ENCODE measurements at regions of chr14 and their contacts with region 1.

Region 1: GRCh38 chr14:95515596-95516552 is 576 bp downstream of the SYNE3 start:
- DNase-seq: peak; percentile 37 to 74
- ATAC-seq: peak; percentile 85 to 94
- H3K4me3 ChIP-seq: peak overlapping the region; percentile 85
- H3K27ac ChIP-seq: peak overlapping the region; percentile 55 to 84; a peak in 5 of 6 replicates
- H3K4me1 ChIP-seq: peaks cover 11% of the 10 kb centered on the region; the same call in 2 of the 3 replicates
- CTCF ChIP-seq: no peak
- EP300 ChIP-seq: no peak
- POLR2A ChIP-seq: no peak
- RAD21 ChIP-seq: no peak

Region 2: GRCh38 chr14:95413289-95414215 is 102.3 kb before region 1 on chr14:
- CTCF ChIA-PET with region 1: no interaction called
- POLR2A ChIA-PET with region 1: no interaction called
- DNase-seq: no peak
- ATAC-seq: peak in 1 of 2 experiments; percentile 25; a peak in 1 of 6 replicates
- H3K4me3 ChIP-seq: no peak overlapping the region
- H3K27ac ChIP-seq: no peak overlapping the region
- H3K4me1 ChIP-seq: no peaks in the 10 kb centered on the region
- CTCF ChIP-seq: no peak
- EP300 ChIP-seq: no peak
- POLR2A ChIP-seq: no peak
- RAD21 ChIP-seq: no peak

Region 3: DNA sequence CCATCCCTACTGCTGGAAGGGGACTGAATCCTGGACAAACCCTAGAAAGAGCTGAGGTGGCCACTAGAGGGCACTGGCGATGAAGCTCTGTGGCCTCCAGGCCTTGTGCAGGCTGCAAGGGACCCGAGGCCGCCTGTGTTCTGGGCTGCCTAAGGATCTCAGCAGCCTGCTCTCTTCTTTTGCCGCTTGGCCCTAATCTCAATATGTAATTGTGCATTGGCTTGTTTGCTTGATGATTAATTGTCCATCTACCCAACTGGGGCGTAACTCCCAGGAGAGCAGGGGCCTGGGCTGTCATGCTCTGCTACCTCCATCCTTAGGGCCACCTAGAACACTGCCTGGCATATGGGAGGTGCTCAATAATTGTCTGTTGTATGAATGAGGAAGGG is 73.2 kb before region 1 on chr14:
- CTCF ChIA-PET with region 1: interaction called, 14 read pairs
- POLR2A ChIA-PET with region 1: no interaction called
- DNase-seq: peak; percentile 69 to 91
- ATAC-seq: peak; percentile 90 to 98
- H3K4me3 ChIP-seq: no peak overlapping the region
- H3K27ac ChIP-seq: no peak overlapping the region
- H3K4me1 ChIP-seq: no peaks in the 10 kb centered on the region
- CTCF ChIP-seq: peak; percentile 83
- EP300 ChIP-seq: no peak
- POLR2A ChIP-seq: no peak
- RAD21 ChIP-seq: peak; percentile 82 to 90

Measured in A549 (cell line).